HEK293 (cell line): ENCODE measurements at regions of chr17 and their contacts with region 1.

Region 1: DNA sequence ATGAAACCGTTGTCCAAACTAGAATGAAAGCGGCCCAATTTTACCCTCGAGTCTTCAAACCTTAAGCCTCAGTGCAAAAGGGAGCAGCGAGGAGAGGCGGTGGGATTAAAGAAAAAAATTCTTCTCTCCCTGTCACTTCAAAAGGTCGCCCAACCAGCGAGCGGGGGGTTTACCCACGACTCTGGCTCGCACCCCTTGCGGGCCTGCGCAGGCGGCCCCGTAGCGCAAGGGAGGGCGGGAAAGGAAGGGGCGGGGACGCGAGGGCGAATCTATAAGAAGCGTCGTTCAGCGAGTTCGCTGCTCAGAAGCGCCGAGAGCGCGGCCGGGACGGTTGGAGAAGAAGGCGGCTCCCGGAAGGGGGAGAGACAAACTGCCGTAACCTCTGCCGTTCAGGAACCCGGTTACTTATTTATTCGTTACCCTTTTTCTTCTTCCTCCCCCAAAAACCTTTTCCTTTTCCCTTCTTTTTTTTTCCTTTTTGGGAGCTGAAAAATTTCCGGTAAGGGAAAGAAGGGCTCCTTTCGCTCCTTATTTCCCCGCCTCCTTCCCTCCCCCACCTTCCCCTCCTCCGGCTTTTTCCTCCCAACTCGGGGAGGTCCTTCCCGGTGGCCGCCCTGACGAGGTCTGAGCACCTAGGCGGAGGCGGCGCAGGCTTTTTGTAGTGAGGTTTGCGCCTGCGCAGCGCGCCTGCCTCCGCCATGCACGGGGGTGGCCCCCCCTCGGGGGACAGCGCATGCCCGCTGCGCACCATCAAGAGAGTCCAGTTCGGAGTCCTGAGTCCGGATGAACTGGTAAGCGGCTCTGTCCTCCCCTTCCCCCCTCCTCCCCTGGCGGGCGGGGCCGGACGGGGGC is at the start of gene POLR2A:
- H3K4me3 ChIP-seq: peak within 1 kb of the TSS; percentile 87
- H3K27ac ChIP-seq: peak within 1 kb of the TSS; percentile 100
- H3K4me1 ChIP-seq: peaks cover 23% of the 10 kb centered on the region
- CTCF ChIP-seq: no peak

Region 2: DNA sequence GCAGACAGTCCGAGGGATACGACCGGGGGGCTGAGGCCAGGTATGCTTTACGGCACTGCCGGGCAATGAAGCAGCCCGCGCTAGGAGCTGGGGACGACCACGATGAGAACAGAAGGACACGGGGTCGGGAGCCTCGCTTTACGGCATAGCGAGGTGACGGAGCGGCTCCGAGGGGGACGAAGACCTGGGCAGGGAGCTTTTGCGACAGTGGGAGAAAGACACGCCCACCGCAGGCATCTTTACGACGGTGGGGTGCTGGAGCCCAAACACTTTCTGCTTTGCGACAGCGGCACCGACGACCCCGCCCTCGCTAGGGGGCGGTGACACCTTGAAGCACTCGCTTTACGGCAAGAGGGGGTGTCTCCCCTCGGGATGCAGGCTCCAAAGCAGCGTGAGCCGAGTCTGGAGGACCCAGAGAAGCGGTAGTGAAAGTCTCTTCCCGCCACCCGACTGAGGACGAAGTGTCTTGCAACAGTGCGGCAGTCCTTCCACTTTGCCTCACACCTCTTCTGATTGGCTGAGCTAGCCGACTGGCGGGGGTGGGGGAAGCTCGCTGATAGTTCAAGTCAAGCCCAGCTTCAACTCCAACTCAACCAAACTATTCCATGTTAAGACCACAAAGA is 154.8 kb before region 1 on chr17:
- CTCF ChIA-PET with region 1: interaction called, 3 read pairs
- POLR2A ChIA-PET with region 1: interaction called, 13 read pairs
- H3K4me3 ChIP-seq: peak overlapping the region; percentile 64
- H3K27ac ChIP-seq: peak overlapping the region; percentile 86
- H3K4me1 ChIP-seq: peaks cover 9% of the 10 kb centered on the region
- CTCF ChIP-seq: no peak

Region 3: GRCh38 chr17:7435221-7435675 is 49.0 kb before region 1 on chr17 and contains the start of gene TMEM102:
- CTCF ChIA-PET with region 1: interaction called, 14 read pairs
- POLR2A ChIA-PET with region 1: interaction called, 39 read pairs
- H3K4me3 ChIP-seq: peak within 1 kb of the TSS; percentile 50
- H3K27ac ChIP-seq: peak within 1 kb of the TSS; percentile 19; the same call in 1 of the 2 replicates
- H3K4me1 ChIP-seq: peaks cover 13% of the 10 kb centered on the region
- CTCF ChIP-seq: no peak

Region 4: GRCh38 chr17:7444682-7445618 is 39.3 kb before region 1 on chr17 and contains the start of gene CHRNB1:
- CTCF ChIA-PET with region 1: interaction called, 4 read pairs
- POLR2A ChIA-PET with region 1: interaction called, 11 read pairs
- H3K4me3 ChIP-seq: peak within 1 kb of the TSS; percentile 57
- H3K27ac ChIP-seq: no peak within 1 kb of the TSS; the same call in 1 of the 2 replicates
- H3K4me1 ChIP-seq: peaks cover 19% of the 10 kb centered on the region
- CTCF ChIP-seq: peak; percentile 64

Region 5: DNA sequence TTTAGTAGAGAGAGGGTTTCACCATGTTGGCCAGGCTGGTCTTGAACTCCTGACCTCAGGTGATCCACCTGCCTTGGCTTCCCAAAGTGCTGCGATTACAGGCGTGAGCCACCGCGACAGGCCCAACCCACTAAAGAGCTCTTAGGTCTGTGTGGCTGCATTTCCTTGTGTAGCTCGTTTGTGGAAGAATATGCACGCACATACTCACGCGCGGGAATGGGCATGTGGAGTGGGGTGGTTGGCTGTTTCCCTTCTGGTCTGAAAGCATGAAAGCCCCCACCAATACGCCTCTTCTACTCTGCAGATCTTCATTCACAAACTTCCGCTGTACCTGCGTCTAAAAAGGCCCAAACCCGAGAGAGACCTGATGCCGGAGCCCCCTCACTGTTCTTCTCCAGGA is 29.3 kb before region 1 on chr17:
- CTCF ChIA-PET with region 1: no interaction called
- POLR2A ChIA-PET with region 1: interaction called, 12 read pairs
- H3K4me3 ChIP-seq: no peak overlapping the region
- H3K27ac ChIP-seq: no peak overlapping the region
- H3K4me1 ChIP-seq: no peaks in the 10 kb centered on the region
- CTCF ChIP-seq: no peak

Region 6: GRCh38 chr17:7583253-7584109 is 99.2 kb after region 1 on chr17 and contains the start of gene MPDU1:
- CTCF ChIA-PET with region 1: no interaction called
- POLR2A ChIA-PET with region 1: interaction called, 14 read pairs
- H3K4me3 ChIP-seq: peak within 1 kb of the TSS; percentile 86
- H3K27ac ChIP-seq: peak within 1 kb of the TSS; percentile 95
- H3K4me1 ChIP-seq: peaks cover 8% of the 10 kb centered on the region; the same call in 1 of the 2 replicates
- CTCF ChIP-seq: peak; percentile 52